Cardiac septum (tissue), 1 donor: ENCODE measurements at regions of chr17 and their contacts with region 1.

Region 1: GRCh38 chr17:82668631-82669099 is 20.4 kb upstream of the WDR45B start:
- DNase-seq: no peak

Region 2: GRCh38 chr17:82568997-82569393 is 99.7 kb before region 1 on chr17:
- intact Hi-C with region 1: no loop called
- DNase-seq: no peak

Region 3: DNA sequence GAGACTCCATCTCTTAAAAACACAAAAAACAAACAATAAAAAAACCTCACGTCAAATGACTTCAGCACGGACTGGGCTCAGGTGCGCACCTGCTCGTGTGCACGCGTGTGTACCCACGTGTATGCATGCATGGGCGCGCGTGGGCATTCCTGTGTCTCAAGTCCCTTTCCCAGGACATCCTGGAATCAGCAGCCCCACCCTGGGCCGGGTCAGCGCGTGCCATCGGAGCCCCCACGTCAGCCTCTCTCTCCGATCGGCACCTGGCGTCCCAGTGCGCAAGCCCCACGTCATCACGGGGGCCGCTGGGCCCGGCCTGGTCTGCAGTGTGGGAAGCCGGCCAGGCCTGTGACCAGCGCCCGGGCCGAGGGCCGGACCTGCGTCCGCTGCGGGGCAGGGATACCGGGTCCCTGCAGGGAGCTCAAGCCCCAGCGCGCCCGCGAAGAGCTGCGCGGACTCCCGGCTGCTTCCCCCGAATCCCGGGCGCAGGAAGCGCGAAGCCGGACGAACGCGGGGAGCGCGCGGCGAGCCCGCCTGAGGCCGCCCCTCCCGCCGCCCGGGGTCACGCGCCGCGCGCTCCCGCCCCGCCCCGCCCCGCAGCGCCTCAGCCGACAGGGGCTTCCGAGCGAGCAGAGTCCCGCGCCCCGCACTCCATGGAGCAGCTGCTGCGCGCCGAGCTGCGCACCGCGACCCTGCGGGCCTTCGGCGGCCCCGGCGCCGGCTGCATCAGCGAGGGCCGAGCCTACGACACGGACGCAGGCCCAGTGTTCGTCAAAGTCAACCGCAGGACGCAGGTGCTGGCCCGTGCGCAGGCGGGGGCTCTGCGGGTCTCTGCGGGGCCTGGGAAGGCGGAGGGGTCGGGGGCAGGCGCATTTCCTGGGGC is 66.6 kb after region 1 on chr17 and contains the start of gene FN3K:
- intact Hi-C with region 1: loop called (anchors 5 kb)
- DNase-seq: no peak
- total RNA-seq, gene FN3K: 82.4 TPM

Region 4: DNA sequence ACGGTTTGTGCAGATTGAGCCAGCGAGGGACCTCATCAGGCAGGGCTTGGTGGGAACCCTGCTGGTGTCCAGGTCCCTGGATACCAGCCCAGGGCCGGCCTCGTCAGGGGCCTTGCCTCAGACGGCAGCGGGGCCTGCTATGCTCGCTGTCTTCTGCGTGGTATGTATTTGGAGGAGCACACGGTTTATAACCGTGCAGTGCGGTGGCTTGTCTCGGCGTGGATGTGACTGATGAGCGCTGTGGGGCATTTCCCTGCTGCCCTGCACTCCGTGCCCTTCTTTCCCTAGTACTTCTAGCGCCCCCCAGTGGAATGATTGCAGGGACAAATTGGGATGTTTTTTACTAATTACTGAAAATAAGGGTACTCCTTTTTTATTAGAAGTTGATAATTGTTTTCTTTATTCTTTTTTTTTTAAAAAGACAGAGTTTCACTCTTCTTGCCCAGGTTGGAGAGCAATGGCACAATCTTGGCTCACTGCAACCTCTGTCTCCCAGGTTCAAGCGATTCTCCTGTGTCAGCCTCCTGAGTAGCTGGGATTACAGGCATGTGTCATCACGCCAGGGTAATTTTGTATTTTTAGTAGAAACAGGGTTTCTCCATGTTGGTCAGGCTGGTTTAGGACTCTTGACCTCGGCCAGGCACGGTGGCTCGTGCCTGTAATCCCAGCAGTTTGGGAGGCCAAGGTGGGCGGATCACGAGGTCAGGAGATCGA is 98.5 kb after region 1 on chr17:
- intact Hi-C with region 1: loop called (anchors 2 kb)
- DNase-seq: no peak